Esophagus squamous epithelium (tissue), 5 donors: ENCODE measurements at regions of chr3 and their contacts with region 1.

Region 1: DNA sequence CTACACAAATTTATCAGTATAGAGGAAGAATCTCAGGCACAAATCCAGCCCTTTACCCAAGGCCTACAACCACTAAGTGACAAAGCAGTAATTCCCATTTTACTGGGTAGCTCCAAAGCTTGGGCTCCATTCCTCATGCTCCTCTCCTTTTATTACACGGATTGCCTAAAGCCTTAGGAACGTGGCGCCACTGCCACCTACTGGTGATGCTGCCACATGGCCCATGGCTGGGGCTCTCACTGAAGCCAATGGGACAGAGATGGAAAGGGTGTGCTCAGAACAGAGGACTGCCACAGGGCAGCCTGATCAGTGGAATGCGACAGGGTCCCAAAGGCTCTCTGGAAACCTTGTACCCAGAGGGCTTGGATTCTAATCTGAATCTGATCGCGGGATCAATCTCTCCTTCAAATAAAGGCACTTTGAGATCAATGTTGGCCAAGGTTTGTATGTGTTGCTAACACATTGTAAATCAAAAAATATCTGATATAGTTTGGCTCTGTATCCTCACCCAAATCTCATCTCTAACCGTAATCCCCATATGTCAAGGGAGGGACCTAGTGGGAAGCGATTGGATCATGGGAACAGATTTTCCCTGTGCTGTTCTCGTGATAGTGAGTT is 33.5 kb upstream of the LYZL4 start:
- DNase-seq: no peak
- H3K4me3 ChIP-seq: no peak overlapping the region
- H3K27ac ChIP-seq: no peak overlapping the region
- H3K4me1 ChIP-seq: no peaks in the 10 kb centered on the region
- H3K27me3 ChIP-seq: peaks cover 0 to 55% (median 0%) of the 10 kb centered on the region in 4 donors
- CTCF ChIP-seq: peak; percentile 90 to 96 (median 91)
- POLR2A ChIP-seq: no peak

Region 2: GRCh38 chr3:42229942-42230688 is 213.8 kb before region 1 on chr3:
- intact Hi-C with region 1: loop called (anchors 5 kb)
- DNase-seq: no peak
- H3K4me3 ChIP-seq: peak overlapping the region in 1 of 4 donors; percentile 27
- H3K27ac ChIP-seq: no peak overlapping the region
- H3K4me1 ChIP-seq: peaks cover 0 to 17% (median 0%) of the 10 kb centered on the region in 3 donors
- H3K27me3 ChIP-seq: peaks cover 0 to 18% (median 0%) of the 10 kb centered on the region in 4 donors
- CTCF ChIP-seq: peak in 5 of 6 experiments; percentile 41 to 62 (median 52)
- POLR2A ChIP-seq: no peak

Region 3: DNA sequence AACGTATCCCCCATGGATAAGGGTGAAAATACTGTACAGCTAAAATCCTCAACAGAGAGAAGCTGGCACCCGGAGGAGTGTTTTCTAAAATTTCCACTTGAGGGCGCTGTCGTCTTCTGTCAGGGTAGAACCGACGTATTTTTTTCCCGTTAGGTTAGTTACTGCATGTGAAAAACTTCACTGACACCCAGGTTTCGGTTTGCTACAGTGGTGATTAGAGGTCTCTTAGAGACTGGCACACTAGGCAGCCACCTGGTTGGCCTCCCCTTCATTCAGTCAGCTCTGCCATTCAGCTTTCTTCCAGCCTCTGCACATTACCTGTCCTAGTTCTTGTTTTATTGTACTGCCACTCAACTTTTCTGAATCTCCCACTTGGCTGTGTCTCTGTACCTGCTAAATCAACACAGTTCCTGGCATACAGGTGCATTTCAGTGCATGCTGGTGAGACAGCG is 196.3 kb before region 1 on chr3:
- intact Hi-C with region 1: loop called (anchors 5 kb)
- DNase-seq: no peak
- H3K4me3 ChIP-seq: no peak overlapping the region
- H3K27ac ChIP-seq: no peak overlapping the region
- H3K4me1 ChIP-seq: peaks cover 0 to 8% (median 0%) of the 10 kb centered on the region in 3 donors
- H3K27me3 ChIP-seq: peaks cover 0 to 45% (median 0%) of the 10 kb centered on the region in 4 donors
- CTCF ChIP-seq: peak; percentile 53 to 82 (median 66)
- POLR2A ChIP-seq: no peak

Region 4: DNA sequence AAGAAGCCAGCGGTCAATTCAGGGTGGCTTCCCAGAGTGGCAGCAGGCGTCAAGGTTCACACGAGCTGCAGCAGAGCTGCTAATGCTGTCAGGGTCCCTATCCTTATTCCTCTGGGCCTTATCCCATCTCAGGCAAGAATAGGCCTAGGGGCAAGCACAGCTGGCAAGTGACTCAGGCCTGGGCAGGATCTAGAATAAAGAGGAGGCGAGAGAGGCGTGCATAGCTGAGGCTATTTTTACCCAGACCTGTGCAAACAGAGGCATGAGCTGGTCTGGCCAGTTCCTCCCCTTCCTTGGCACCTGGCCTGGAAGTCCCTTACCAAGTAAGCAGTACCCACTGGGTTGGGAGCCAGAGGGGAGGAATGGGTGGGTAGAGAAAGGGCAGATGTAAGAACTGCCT is 46.3 kb after region 1 on chr3:
- intact Hi-C with region 1: no loop called
- DNase-seq: no peak
- H3K4me3 ChIP-seq: no peak overlapping the region
- H3K27ac ChIP-seq: peak overlapping the region in 2 of 4 donors; percentile 6 to 12
- H3K4me1 ChIP-seq: peaks cover 0 to 20% (median 7%) of the 10 kb centered on the region in 3 donors
- H3K27me3 ChIP-seq: peaks cover 0 to 12% (median 0%) of the 10 kb centered on the region in 4 donors
- CTCF ChIP-seq: no peak
- POLR2A ChIP-seq: no peak

Region 5: DNA sequence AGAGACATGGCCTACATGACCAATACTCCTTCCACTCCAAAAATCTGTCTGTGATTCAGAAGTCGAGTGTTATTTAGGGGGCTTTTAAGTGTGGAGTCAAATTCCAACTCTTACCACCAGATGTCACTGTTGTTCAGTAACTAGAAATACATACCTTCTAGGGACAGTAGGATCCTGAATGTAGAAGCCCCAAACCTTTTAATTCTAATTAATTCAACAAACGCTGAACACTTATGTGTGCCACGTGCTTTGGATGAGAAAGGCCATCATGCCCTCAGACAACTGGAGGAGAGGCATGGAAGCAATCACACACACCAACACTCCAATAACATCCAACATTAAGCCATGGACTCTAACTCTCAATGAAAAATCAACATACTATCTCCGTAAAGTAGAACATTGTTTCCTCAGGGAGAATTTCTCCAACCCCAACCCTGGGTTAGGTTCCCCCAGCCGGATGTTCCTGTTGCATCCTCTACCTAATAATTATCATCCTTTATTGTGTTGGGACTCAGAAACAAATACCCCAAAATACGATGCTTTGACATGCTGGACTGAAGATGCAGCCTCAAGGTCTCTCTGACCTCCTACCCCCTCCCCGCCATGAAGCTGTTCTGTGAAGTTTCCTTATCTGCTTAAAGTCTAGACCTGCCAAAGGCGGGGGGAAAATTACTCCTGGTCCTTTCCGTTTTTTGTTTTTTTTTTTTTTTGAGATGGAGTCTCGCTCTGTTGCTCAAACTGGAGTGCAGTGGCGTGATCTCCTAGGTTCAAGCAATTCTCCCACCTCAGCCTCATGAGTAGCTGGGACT is 337.2 kb after region 1 on chr3:
- intact Hi-C with region 1: no loop called
- DNase-seq: no peak
- H3K4me3 ChIP-seq: no peak overlapping the region
- H3K27ac ChIP-seq: peak overlapping the region in 3 of 4 donors; percentile 78 to 87 (median 80)
- H3K4me1 ChIP-seq: peaks cover 0 to 76% (median 21%) of the 10 kb centered on the region in 3 donors
- H3K27me3 ChIP-seq: no peaks in the 10 kb centered on the region
- CTCF ChIP-seq: peak; percentile 73 to 84 (median 82)
- POLR2A ChIP-seq: no peak